Mammary epithelial cell (primary cell): ENCODE measurements at regions of chr1 and their contacts with region 1.

Region 1: DNA sequence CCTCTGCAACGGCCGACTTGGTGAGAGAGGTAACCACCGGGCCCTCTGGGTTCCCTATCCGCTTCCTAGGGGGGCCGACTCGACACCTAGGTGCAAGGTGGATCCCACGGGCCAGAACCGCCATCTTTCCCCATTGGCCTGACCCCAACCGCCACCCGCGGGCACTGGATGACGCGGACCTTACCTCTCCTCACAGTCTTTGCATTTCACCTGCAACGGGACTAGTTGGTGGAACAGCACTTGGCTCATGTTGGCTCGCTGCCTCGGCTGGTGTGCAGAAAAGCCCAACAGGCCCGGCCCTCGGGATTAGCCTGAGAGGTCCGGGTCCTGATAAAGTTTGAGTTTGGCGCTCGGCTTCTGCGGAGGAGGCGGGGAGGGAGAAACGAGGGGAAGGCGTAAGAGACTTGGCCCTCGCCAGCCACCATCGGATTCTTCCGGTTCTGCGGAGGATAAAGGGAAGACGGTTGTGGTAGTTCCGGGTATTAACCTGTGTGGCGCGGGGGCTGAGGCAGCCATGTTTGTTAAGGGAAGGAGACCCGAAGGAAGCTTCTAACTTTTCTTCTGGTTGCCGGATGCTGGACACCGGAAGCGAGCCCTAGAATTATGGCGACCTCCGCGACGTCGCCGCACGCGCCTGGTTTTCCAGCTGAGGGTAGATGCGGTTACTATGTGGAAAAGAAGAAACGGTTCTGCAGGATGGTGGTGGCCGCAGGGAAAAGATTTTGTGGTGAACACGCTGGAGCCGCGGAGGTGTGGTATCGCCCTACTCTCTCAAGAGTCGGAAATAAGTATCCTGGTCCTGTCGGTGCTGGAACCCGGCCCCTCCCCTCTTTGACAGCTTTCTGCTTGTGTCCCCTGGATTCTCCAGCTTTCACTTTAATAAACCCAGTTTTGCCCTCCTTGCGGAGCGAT is at the starts of genes SASS6 and TRMT13:
- DNase-seq: peak; percentile 97
- H3K4me3 ChIP-seq: peak within 1 kb of the TSS; percentile 77 to 91 (median 90)
- H3K27ac ChIP-seq: peak within 1 kb of the TSS; percentile 54
- H3K4me1 ChIP-seq: peaks cover 6% of the 10 kb centered on the region
- H3K27me3 ChIP-seq: no peaks in the 10 kb centered on the region
- CTCF ChIP-seq: no peak
- total RNA-seq, gene SASS6: 2.8 to 6.0 TPM
- total RNA-seq, gene TRMT13: 11.0 to 14.3 TPM

Region 2: DNA sequence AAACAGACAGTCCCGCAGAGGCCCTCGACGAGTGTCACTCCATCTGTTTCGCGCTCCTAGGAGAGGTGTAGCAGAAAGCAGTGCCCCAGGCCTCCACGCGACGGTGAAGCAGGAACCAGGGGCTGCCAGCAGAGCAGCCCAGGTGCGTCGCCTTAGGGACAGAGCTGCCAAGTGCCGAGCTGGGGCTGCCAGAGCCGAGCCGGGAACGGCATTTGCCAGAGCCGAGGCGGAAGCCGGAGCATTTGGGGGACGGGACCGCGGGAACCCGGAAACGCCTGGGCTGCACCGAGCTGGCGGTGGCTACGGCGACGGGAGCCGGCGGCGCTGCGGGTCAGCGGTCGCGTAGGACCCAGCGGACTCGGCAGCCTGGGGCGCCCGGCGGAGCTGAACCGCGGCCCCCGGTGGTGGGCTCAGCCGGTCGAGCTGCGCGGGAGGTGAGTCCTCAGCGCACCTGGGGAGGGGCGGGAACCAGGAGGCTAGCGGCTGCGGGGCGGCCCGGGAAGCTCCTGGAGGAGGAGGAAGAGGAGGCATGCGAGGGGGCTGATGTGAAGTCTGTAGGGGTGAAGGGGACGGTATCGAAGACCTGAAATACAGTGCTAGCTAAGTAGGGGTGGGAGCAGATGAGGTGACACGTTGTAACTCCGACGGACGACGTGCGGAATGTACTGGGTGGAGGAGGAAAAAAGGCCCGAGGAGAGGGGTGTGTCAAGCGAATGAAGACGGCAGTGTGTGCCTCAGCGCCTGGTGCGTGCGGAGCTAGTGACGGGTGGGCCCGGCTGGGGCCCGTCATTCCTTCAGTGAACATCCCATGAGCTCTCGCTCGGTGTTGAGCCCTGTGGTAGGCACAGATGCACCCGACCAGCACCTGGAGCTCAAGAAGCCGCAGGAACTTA is 162.8 kb before region 1 on chr1 and contains the start of gene SLC35A3:
- CTCF ChIA-PET with region 1: no interaction called
- dilution Hi-C with region 1: no loop called
- in situ Hi-C with region 1: no loop called
- intact Hi-C with region 1: loop called (anchors 2 kb)
- DNase-seq: peak; percentile 77
- H3K4me3 ChIP-seq: peak within 1 kb of the TSS; percentile 50 to 90 (median 69)
- H3K27ac ChIP-seq: peak within 1 kb of the TSS; percentile 84
- H3K4me1 ChIP-seq: peaks cover 13% of the 10 kb centered on the region
- H3K27me3 ChIP-seq: no peaks in the 10 kb centered on the region
- CTCF ChIP-seq: no peak
- total RNA-seq, gene SLC35A3: 29.5 to 46.2 TPM

Region 3: DNA sequence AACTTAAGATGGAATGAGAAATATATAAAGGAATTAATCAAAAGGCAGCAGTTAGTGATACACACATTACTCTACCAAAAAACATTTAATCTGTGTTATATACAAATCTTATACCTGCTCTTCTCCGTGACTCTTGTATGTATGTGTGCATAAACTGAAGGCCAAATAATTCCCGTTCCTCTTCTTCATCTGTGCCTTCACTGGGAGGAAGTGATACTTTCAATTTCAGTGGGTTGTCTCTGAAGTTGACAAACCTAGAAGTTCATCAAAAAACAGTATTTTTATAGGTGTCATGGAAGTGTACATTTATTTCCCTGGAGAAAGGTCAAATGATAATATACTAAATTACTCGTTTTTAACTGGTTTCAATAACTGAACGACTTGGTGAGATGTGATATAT is 19.4 kb after region 1 on chr1:
- CTCF ChIA-PET with region 1: no interaction called
- dilution Hi-C with region 1: no loop called
- in situ Hi-C with region 1: no loop called
- intact Hi-C with region 1: no loop called
- DNase-seq: no peak
- H3K4me3 ChIP-seq: no peak overlapping the region
- H3K27ac ChIP-seq: no peak overlapping the region
- H3K4me1 ChIP-seq: no peaks in the 10 kb centered on the region
- H3K27me3 ChIP-seq: no peaks in the 10 kb centered on the region
- CTCF ChIP-seq: no peak

Region 4: GRCh38 chr1:100265931-100266740 is 133.3 kb after region 1 on chr1 and contains the start of gene RTCA:
- CTCF ChIA-PET with region 1: no interaction called
- dilution Hi-C with region 1: no loop called
- in situ Hi-C with region 1: no loop called
- intact Hi-C with region 1: loop called (anchors 5 kb)
- DNase-seq: peak; percentile 91
- H3K4me3 ChIP-seq: peak within 1 kb of the TSS; percentile 88 to 97 (median 93)
- H3K27ac ChIP-seq: peak within 1 kb of the TSS; percentile 75
- H3K4me1 ChIP-seq: peaks cover 15% of the 10 kb centered on the region
- H3K27me3 ChIP-seq: no peaks in the 10 kb centered on the region
- CTCF ChIP-seq: no peak
- total RNA-seq, gene RTCA: 31.5 to 60.2 TPM

Region 5: DNA sequence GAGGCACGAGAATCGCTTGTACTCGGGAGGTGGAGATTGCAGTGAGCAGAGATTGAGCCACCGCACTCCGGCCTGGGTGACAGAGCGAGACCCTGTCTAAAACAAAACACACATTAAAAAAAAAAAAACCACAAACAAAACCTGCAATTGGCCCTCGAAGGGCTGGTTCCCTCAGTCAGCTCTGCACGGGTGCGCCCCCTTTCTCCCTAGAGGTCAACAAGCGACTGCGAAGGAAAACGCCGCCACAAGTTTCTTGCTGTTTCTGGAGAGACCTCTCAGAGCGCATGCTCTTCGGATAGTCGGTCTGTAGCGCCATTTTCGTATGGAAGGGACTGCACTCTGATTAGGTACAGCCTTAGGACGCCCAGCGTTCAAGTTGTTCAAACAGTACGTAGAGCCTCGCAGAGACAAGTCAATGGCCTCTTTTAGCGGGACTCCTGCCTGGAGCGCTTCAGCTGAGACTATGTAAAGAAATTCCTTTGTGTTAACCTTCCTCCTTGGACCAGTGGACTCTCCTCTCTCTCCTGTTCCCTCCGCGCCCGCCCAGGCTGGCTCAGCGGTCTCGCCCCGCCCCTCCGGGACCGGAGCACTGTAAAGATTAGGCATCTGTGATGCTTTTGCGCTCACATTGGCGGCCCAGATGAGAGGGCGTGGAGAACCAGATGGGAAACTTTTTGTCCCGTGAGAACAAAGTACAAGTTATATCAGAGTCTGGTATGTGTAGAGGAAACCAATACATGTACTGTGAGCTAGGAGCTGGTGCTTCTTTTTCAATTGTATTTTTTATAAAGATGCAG is 218.5 kb after region 1 on chr1:
- CTCF ChIA-PET with region 1: no interaction called
- dilution Hi-C with region 1: no loop called
- in situ Hi-C with region 1: no loop called
- intact Hi-C with region 1: loop called (anchors 1 kb)
- DNase-seq: peak; percentile 93
- H3K4me3 ChIP-seq: peak overlapping the region; percentile 84 to 94 (median 88)
- H3K27ac ChIP-seq: peak overlapping the region; percentile 77
- H3K4me1 ChIP-seq: peaks cover 15% of the 10 kb centered on the region
- H3K27me3 ChIP-seq: no peaks in the 10 kb centered on the region
- CTCF ChIP-seq: peak; percentile 16 to 18